ENCODE measurements at regions of chr13 and their contacts with region 1.

Region 1: DNA sequence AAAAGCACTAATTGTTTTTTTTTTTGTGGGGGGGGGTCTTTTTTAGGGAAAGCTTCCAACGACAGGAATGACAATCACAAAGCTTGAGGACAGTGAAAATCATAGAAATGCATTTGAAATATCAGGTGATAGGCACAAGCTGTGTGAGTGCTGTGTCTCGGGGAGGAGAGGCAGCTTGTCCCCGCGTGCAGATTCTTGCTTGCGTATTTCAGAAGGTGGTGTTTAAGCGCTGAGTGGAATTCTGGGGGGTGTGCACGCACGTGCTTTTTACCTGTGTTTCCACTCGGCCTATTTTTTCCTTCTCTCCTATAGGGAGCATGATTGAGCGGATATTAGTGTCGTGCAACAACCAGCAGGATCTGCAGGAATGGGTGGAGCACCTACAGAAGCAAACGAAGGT is 40.2 kb upstream of the TEX29 start:
- DNase-seq: no peak
- H3K4me3 ChIP-seq: no peak overlapping the region
- H3K27ac ChIP-seq: no peak overlapping the region
- H3K4me1 ChIP-seq: no peaks in the 10 kb centered on the region
- H3K27me3 ChIP-seq: no peaks in the 10 kb centered on the region
- CTCF ChIP-seq: no peak

Region 2: DNA sequence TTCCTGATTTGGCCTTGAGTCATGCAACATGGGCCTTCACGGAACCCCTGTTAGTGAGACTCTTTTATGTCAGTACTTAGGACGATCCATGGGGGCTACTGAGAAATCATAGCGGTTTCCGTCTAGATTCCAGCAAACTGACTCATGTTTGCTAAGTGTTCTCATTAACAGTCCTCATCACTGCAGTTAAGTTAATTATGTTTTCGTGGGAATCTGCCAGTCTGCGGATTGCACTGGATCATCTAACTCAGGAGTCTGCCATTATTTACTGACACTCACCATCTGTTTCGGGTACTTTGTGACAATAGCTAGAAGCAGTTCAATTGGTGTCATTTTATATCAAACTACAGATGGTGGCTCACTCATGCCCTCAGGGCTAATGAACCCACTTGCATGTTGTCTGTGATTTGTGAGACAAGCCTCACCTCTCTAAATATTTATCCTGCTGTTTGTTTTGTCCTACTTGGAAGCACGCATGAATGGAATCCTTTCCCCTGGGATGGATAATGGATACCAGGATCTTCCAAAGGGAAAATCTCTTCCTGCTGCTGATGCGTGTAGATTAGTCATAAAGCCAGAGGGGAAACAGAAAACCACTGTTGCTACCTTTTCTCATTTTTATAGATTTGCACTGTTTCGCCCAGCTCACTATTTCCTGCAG is 780.5 kb before region 1 on chr13:
- CTCF ChIA-PET with region 1: no interaction called
- POLR2A ChIA-PET with region 1: no interaction called
- intact Hi-C with region 1: no loop called
- DNase-seq: peak; percentile 75
- H3K4me3 ChIP-seq: no peak overlapping the region
- H3K27ac ChIP-seq: peak overlapping the region; percentile 34
- H3K4me1 ChIP-seq: peaks cover 14% of the 10 kb centered on the region
- H3K27me3 ChIP-seq: no peaks in the 10 kb centered on the region
- CTCF ChIP-seq: no peak

Region 3: DNA sequence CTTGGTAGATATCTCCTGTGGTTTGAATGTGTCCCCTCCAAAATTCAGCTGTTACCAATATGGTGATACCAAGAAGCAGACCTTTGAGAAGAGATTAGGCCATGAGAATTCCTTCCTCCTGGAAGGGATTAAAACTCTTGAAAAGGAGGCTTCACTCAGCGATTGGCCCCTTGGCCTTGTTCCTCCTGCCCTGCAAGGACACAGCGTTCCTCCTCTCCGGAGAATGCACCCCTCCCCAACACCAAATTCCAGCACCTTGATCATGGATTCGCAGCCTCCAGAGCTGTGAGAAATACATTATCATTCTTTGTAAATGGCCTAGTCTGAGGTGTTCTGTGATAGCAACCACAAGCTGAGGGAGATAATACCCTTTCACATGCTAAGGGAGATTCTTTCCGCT is 199.6 kb before region 1 on chr13:
- CTCF ChIA-PET with region 1: no interaction called
- POLR2A ChIA-PET with region 1: no interaction called
- intact Hi-C with region 1: no loop called
- DNase-seq: no peak
- H3K4me3 ChIP-seq: no peak overlapping the region
- H3K27ac ChIP-seq: no peak overlapping the region
- H3K4me1 ChIP-seq: no peaks in the 10 kb centered on the region
- H3K27me3 ChIP-seq: no peaks in the 10 kb centered on the region
- CTCF ChIP-seq: no peak

Region 4: GRCh38 chr13:111259058-111259457 is 21.2 kb before region 1 on chr13:
- CTCF ChIA-PET with region 1: no interaction called
- POLR2A ChIA-PET with region 1: interaction called, 12 read pairs
- intact Hi-C with region 1: no loop called
- DNase-seq: no peak
- H3K4me3 ChIP-seq: no peak overlapping the region
- H3K27ac ChIP-seq: no peak overlapping the region
- H3K4me1 ChIP-seq: no peaks in the 10 kb centered on the region
- H3K27me3 ChIP-seq: no peaks in the 10 kb centered on the region
- CTCF ChIP-seq: no peak

Region 5: DNA sequence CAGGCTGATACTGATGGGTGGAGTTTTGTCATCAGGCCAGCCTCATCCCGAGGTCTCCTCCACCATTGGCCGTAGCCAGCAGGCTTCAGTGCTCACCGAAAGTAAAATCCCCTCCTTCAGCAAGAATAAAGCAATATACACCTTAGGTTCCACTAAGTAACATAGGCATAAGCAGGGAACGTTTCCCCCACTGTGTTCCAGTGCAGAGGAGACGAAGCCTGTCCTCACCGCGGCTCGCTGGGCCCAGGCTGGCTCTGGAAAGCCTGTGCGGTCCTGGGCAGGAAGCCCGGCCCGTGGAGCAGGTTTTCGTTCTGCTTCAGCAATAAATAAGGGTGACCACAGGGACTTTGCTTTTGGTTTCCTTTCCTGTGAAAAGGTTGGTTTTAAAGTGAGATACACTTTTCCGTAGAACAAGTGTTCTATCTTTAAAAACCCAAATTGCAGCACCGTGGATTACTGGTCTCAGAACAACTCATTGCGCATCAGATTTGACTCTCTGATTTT is 23.9 kb after region 1 on chr13:
- CTCF ChIA-PET with region 1: no interaction called
- POLR2A ChIA-PET with region 1: no interaction called
- intact Hi-C with region 1: no loop called
- DNase-seq: no peak
- H3K4me3 ChIP-seq: no peak overlapping the region
- H3K27ac ChIP-seq: no peak overlapping the region
- H3K4me1 ChIP-seq: no peaks in the 10 kb centered on the region
- H3K27me3 ChIP-seq: no peaks in the 10 kb centered on the region
- CTCF ChIP-seq: no peak

Region 6: DNA sequence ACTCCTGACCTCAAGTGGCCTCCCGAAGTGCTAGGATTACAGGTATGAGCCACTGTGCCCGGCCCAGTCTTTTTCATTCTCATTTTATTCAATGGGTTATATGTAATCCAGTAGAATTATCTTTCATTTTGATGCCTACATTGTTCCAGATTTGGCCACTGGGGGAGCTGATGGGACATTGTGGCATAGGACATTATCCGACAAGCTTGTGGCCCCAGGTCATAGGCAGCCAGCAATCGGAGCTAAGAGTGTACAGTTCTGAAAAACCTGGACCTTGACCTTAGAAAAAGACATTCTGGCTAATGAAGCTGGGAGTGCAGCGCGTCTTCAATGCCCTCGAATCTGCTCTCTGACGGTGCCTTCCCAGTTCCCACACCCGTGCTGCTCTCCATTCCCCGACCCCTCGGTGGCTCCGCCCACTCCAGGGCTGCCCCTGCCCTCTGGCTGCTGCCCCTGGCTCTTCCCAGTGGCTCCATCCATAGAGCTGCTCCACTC is 148.9 kb after region 1 on chr13:
- CTCF ChIA-PET with region 1: no interaction called
- POLR2A ChIA-PET with region 1: no interaction called
- intact Hi-C with region 1: no loop called
- DNase-seq: peak; percentile 56
- H3K4me3 ChIP-seq: no peak overlapping the region
- H3K27ac ChIP-seq: no peak overlapping the region
- H3K4me1 ChIP-seq: no peaks in the 10 kb centered on the region
- H3K27me3 ChIP-seq: peaks cover 58% of the 10 kb centered on the region
- CTCF ChIP-seq: peak; percentile 68